ENCODE measurements at regions of chr9 and their contacts with region 1.

Region 1: GRCh38 chr9:6506571-6506970 is 93.6 kb downstream of the UHRF2 start:
- DNase-seq: no peak
- ATAC-seq: no peak
- H3K4me3 Mint-ChIP-seq: no peak overlapping the region
- H3K27ac Mint-ChIP-seq: no peak overlapping the region
- H3K4me1 Mint-ChIP-seq: no peaks in the 10 kb centered on the region
- H3K27me3 Mint-ChIP-seq: no peaks in the 10 kb centered on the region
- CTCF ChIP-seq: no peak

Region 2: GRCh38 chr9:6353851-6354686 is 152.5 kb before region 1 on chr9:
- CTCF ChIA-PET with region 1: no interaction called
- POLR2A ChIA-PET with region 1: no interaction called
- intact Hi-C with region 1: loop called (anchors 10 kb)
- DNase-seq: peak; percentile 28
- ATAC-seq: peak; percentile 93
- H3K4me3 Mint-ChIP-seq: no peak overlapping the region
- H3K27ac Mint-ChIP-seq: no peak overlapping the region
- H3K4me1 Mint-ChIP-seq: peaks cover 6% of the 10 kb centered on the region
- H3K27me3 Mint-ChIP-seq: peaks cover 13% of the 10 kb centered on the region
- CTCF ChIP-seq: peak; percentile 83

Measured in activated CD8-positive, alpha-beta T cell treated with anti-CD3 and anti-CD28 coated beads for 36 hours (primary cell).